PC-3 (cell line): ENCODE measurements at regions of chr10 and their contacts with region 1.

Region 1: GRCh38 chr10:31947144-31947926 is 18.7 kb upstream of the ARHGAP12 start:
- DNase-seq: peak; percentile 86
- ATAC-seq: peak; percentile 76
- H3K4me3 ChIP-seq: peak overlapping the region; percentile 35; the same call in 1 of the 2 replicates
- H3K27ac ChIP-seq: peak overlapping the region; percentile 13; the same call in 1 of the 2 replicates
- H3K4me1 ChIP-seq: peaks cover 47% of the 10 kb centered on the region
- H3K27me3 ChIP-seq: no peaks in the 10 kb centered on the region
- CTCF ChIP-seq: peak; percentile 69

Region 2: GRCh38 chr10:32005050-32005449 is 57.7 kb after region 1 on chr10:
- CTCF ChIA-PET with region 1: no interaction called
- POLR2A ChIA-PET with region 1: no interaction called
- intact Hi-C with region 1: loop called (anchors 10 kb)
- DNase-seq: peak; percentile 72
- ATAC-seq: peak; percentile 76
- H3K4me3 ChIP-seq: no peak overlapping the region
- H3K27ac ChIP-seq: no peak overlapping the region
- H3K4me1 ChIP-seq: no peaks in the 10 kb centered on the region
- H3K27me3 ChIP-seq: no peaks in the 10 kb centered on the region
- CTCF ChIP-seq: peak; percentile 70